ENCODE measurements at regions of chr15 and their contacts with region 1.

Region 1: DNA sequence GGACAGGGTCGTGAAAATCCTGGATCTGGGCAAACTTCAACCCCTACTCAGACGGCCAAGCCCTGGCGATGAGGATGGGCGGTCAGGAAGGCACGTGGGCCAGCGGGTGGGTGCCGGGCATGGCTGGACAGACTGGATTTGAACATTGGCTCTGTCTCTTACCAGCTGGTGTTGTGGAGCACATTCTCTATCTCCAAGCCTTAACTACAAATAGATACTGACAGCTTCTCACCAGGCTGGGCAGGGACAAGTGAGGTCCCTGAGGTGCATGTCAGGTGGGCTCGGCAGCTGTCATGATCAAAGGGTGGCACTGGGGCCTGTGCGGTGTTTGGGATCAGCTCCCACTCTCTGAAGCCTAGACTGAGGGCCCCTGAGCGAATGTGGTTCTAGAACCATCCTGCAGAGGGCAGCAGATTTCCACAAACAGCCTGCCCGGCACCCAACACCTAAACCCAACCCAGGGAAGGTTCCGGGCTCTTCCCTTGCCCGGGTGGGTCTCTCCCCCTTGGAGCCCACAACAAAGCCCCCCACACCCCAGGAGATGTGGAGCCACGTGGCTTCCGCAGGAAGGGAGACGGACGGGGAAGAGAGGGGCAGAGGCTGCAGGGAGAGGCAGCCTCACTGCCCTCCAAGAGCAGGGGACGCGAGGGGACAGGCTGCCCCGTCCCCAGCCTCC is 58.4 kb downstream of the RGMA start:
- DNase-seq: peak; percentile 67 to 85
- ATAC-seq: peak; percentile 51 to 58
- H3K4me3 ChIP-seq: peak overlapping the region in 1 of 4 donors; percentile 14
- H3K27ac ChIP-seq: peak overlapping the region; percentile 89 to 94 (median 91)
- H3K4me1 ChIP-seq: peaks cover 53 to 55% of the 10 kb centered on the region in 2 donors
- H3K27me3 ChIP-seq: no peaks in the 10 kb centered on the region
- CTCF ChIP-seq: peak; percentile 88 to 94 (median 92)
- POLR2A ChIP-seq: no peak

Region 2: DNA sequence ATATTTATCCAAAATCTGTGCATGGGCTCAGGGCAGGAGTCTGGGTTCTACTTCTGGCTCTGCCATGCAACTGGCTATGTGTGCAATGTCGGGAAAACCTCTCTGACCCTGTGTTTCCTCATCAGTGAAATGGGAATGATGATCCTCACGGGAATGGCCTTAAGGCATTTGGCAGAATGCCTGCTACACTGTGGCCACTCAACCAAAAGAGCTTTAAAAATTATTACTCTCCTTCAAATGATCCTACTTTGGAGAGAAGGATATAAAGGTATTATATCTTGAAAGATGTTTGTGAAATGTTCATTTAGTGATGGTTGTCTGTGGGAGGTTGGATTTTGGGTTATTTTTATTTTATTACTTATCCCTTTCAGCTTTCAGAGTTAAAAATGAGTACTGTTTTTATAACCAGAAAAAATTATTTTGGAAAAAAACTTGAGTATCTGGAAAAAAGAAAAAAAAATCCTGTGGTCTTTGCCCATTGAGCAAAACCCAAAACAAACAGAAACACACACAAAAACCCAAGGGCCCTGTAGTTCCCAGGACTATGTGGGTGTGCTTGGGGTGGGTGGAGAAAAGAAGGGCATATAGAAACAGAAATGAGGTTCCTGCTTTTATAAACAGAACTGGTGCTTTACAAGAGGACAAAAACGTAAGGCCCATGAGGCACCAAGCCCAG is 36.4 kb after region 1 on chr15:
- in situ Hi-C with region 1: no loop called
- intact Hi-C with region 1: loop called (anchors 2 kb)
- DNase-seq: peak in 1 of 2 donors; percentile 46
- ATAC-seq: no peak
- H3K4me3 ChIP-seq: peak overlapping the region in 2 of 4 donors; percentile 15 to 19
- H3K27ac ChIP-seq: peak overlapping the region; percentile 94 to 98 (median 96)
- H3K4me1 ChIP-seq: peaks cover 90 to 96% of the 10 kb centered on the region in 2 donors
- H3K27me3 ChIP-seq: no peaks in the 10 kb centered on the region
- CTCF ChIP-seq: no peak
- POLR2A ChIP-seq: no peak

Region 3: DNA sequence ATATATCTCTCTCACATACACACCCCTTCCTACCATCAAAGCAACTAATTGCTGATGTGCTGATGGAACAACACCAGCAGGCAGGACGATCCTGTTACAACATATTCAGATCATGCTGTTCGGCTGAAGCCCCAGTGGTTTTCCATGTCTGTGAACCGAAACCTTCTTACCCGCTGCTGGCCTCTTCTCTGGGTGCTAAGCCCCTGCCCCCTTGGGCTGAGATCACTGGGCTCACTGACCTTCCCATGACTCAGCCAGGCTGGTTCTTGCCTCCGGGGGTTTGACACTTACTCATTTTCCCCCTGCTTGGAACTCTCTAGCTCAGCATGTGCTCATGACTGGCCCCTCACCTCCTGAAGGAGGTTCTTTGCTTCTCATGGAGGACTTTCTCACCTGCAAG is 180.4 kb after region 1 on chr15:
- in situ Hi-C with region 1: no loop called
- intact Hi-C with region 1: loop called (anchors 2 kb)
- DNase-seq: peak; percentile 64 to 85
- ATAC-seq: peak; percentile 50 to 66
- H3K4me3 ChIP-seq: no peak overlapping the region
- H3K27ac ChIP-seq: peak overlapping the region; percentile 76 to 90 (median 86)
- H3K4me1 ChIP-seq: peaks cover 18 to 45% of the 10 kb centered on the region in 2 donors
- H3K27me3 ChIP-seq: no peaks in the 10 kb centered on the region
- CTCF ChIP-seq: no peak
- POLR2A ChIP-seq: no peak

Region 4: GRCh38 chr15:93965304-93965908 is 934.8 kb after region 1 on chr15:
- in situ Hi-C with region 1: loop called in 1 of 4 experiments (anchors 10 kb)
- intact Hi-C with region 1: no loop called
- DNase-seq: no peak
- ATAC-seq: no peak
- H3K4me3 ChIP-seq: no peak overlapping the region
- H3K27ac ChIP-seq: no peak overlapping the region
- H3K4me1 ChIP-seq: peaks cover 8 to 13% of the 10 kb centered on the region in 2 donors
- H3K27me3 ChIP-seq: no peaks in the 10 kb centered on the region
- CTCF ChIP-seq: no peak
- POLR2A ChIP-seq: no peak

Region 5: GRCh38 chr15:93997084-93997918 is 966.7 kb after region 1 on chr15:
- in situ Hi-C with region 1: loop called in 2 of 4 experiments (anchors 25 kb)
- intact Hi-C with region 1: no loop called
- DNase-seq: no peak
- ATAC-seq: no peak
- H3K4me3 ChIP-seq: no peak overlapping the region
- H3K27ac ChIP-seq: no peak overlapping the region
- H3K4me1 ChIP-seq: peaks cover 0 to 15% of the 10 kb centered on the region in 2 donors
- H3K27me3 ChIP-seq: no peaks in the 10 kb centered on the region
- CTCF ChIP-seq: peak in 4 of 5 experiments; percentile 18 to 57 (median 39)
- POLR2A ChIP-seq: no peak

Region 6: DNA sequence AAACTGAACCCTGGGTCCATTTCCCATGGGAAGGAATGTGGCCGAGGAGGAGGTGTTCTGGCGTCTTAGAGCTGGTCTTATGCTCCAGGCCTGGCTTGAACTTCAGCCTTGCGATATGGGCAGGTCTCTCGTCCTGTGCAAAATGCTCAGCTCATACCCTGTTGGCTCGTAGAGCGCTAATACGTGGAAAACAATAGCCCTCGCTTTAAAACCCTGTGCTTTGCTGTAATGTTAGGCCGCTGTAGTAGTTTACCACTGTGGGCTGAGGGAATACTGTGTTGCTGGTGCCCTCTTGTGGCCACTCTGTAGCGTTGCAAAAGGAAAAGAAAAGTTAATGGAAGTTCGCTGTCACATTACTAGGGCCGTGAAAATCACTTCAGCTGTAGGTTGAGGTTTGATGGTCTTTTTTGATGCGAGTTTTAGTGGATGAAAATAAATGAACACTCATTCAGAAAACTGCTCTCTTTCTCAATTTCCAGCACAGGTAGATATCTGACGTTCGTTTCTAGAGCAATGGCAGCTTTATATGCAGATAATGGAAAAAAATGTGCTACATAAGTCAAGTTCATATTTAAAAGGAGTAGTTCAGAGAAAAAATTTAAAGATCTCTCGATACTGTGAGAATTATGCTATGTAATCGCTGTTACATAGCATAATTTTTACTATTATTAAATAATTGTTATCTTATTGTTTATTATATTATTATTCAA is 1293.7 kb after region 1 on chr15:
- in situ Hi-C with region 1: loop called in 1 of 4 experiments (anchors 25 kb)
- intact Hi-C with region 1: loop called (anchors 5 kb)
- DNase-seq: peak in 1 of 2 donors; percentile 17
- ATAC-seq: peak; percentile 77 to 96
- H3K4me3 ChIP-seq: no peak overlapping the region
- H3K27ac ChIP-seq: no peak overlapping the region
- H3K4me1 ChIP-seq: no peaks in the 10 kb centered on the region
- H3K27me3 ChIP-seq: no peaks in the 10 kb centered on the region
- CTCF ChIP-seq: peak; percentile 42 to 86 (median 69)
- POLR2A ChIP-seq: no peak